Left cardiac atrium (tissue), 4 donors: ENCODE measurements at regions of chr4 and their contacts with region 1.

Region 1: DNA sequence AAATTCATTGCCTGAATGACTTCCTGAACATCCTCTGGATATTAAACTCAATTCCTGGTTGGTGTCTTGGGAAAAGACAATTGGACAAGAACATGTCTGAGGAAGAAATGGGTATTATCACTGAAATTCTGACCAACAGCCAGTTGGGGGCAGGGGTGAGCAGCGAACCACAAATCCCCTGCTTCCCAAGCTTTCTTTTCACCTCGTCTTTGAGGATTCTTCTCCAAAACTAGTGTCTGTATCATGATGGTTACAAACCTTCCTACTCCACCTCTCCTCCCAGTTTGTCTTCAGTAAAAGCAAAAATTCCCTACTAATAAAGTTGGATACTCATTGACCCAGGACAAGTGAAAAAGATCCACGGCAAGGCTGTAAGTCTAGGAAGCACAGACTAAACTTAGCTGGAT is 48.3 kb upstream of the WDR1 start:
- DNase-seq: no peak
- ATAC-seq: peak in 1 of 2 donors; percentile 48

Region 2: GRCh38 chr4:10074767-10075105 is 90.1 kb before region 1 on chr4:
- intact Hi-C with region 1: no loop called
- DNase-seq: no peak
- ATAC-seq: peak in 1 of 2 donors; percentile 8

Region 3: GRCh38 chr4:10239982-10240654 is 75.2 kb after region 1 on chr4:
- intact Hi-C with region 1: loop called in 1 of 2 experiments (anchors 10 kb)
- DNase-seq: peak; percentile 26
- ATAC-seq: peak; percentile 70 to 78

Region 4: DNA sequence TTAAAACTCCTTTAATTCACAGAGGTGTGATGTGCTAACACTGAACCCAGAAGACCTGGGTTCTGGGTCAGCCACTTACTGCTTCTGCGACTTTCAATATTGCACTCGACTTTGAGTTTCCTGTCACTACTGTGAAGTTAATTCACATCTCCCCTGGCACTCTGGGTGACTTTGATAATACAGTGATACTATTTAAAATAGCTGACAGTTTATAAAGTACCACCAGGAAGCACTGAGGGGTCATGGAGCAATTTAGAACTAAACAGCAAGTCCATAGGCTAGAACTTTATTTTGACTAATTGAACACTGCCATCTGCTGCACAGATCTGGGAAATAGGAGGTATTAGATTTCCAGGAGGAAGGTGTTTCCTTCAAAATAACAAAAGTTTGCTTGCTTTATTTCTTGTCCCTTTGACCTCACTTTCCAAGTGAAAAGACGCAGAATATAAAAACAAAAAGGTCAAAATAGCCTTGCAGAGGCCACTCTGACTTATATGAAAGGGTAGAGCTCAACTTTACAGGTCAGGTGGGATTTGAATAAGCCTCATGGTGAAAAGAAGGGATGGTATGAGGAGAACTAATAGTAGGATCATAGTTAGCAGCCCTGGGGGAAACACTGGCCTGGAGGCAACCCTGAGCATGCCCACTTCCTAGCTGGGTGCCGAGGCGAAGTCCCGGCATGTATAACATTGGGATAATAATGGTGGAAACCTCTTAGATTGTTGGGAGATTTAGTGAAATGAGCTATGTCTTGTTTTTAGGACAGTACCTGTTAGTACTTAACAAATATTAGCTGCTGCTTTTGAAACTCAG is 239.0 kb after region 1 on chr4:
- intact Hi-C with region 1: loop called (anchors 2 to 5 kb)
- DNase-seq: no peak
- ATAC-seq: peak; percentile 56 to 57